GM12878 (cell line): ENCODE measurements at regions of chr3 and their contacts with region 1.

Region 1: DNA sequence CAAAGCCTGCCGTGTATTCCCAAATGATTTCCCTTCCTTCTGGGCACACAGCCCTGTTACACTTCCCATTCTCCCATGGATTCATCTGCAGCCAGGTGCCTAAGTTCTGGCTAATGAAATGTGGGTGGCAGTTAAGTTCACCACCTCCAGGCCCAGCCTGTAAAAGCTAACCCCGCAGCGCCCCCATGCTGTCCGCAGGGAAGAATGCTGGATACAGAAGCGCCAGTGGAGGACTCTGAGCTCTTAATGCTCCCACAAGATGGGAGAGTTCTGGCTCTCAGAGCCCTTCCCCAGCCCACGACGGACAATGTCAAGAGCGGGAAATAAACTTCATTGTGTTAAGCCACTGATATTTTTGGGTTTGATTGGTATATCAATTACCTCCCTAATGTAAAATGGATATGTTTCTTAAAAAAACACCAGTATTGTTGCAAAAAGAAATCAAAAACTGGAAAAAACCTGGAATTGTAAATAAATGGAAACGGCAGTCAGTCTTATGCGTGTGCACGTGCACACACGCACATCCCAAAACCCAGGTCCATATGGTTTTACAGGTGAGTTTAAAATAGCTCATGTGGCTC is 37.7 kb upstream of the FGD5 start:
- DNase-seq: peak; percentile 31
- ATAC-seq: peak; percentile 100
- H3K4me3 ChIP-seq: no peak overlapping the region
- H3K27ac ChIP-seq: no peak overlapping the region
- H3K4me1 ChIP-seq: no peaks in the 10 kb centered on the region
- H3K27me3 ChIP-seq: no peaks in the 10 kb centered on the region; a peak in 1 of 4 replicates
- CTCF ChIP-seq: peak; percentile 80 to 93 (median 87)
- EP300 ChIP-seq: no peak
- POLR2A ChIP-seq: no peak
- RAD21 ChIP-seq: peak; percentile 99

Region 2: DNA sequence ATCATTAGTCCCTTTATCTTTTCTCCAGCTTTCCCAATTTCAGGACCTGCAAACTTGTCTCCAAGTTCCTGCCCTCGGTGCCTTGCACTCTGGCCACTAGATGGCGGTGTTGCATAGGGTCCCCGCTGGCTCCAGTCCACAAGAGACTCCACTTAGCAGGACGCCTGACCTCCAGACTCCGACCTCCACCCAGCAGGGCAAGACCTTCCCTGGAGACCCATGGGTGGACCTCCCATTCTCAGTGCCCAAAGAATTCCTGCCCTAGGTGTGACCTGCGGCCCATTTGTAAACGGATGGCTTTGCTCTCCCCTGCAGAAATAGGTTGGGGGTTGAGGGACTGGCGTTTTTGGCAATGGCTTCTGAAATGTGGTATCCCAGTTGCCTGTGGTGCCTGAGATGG is 519.8 kb before region 1 on chr3:
- CTCF ChIA-PET with region 1: no interaction called
- POLR2A ChIA-PET with region 1: no interaction called
- RAD21 ChIA-PET with region 1: no interaction called
- SMC1A ChIA-PET with region 1: no interaction called
- in situ Hi-C with region 1: no loop called
- intact Hi-C with region 1: loop called (anchors 2 kb)
- DNase-seq: peak; percentile 16
- ATAC-seq: peak; percentile 94
- H3K4me3 ChIP-seq: no peak overlapping the region
- H3K27ac ChIP-seq: no peak overlapping the region
- H3K4me1 ChIP-seq: no peaks in the 10 kb centered on the region
- H3K27me3 ChIP-seq: peaks cover 0 to 4% of the 10 kb centered on the region in 2 experiments; a peak in 2 of 4 replicates
- CTCF ChIP-seq: peak; percentile 89 to 95 (median 94); a peak in 5 of 6 replicates
- EP300 ChIP-seq: no peak
- POLR2A ChIP-seq: no peak
- RAD21 ChIP-seq: peak; percentile 98

Region 3: GRCh38 chr3:14626881-14627411 is 154.1 kb before region 1 on chr3:
- CTCF ChIA-PET with region 1: interaction called, 120 read pairs
- POLR2A ChIA-PET with region 1: no interaction called
- RAD21 ChIA-PET with region 1: interaction called, 15 read pairs
- SMC1A ChIA-PET with region 1: interaction called, 28 read pairs
- in situ Hi-C with region 1: no loop called
- intact Hi-C with region 1: no loop called
- DNase-seq: no peak
- ATAC-seq: no peak
- H3K4me3 ChIP-seq: no peak overlapping the region
- H3K27ac ChIP-seq: no peak overlapping the region
- H3K4me1 ChIP-seq: no peaks in the 10 kb centered on the region
- H3K27me3 ChIP-seq: peaks cover 2 to 8% of the 10 kb centered on the region in 2 experiments; a peak in 3 of 4 replicates
- CTCF ChIP-seq: no peak
- EP300 ChIP-seq: no peak
- POLR2A ChIP-seq: no peak
- RAD21 ChIP-seq: no peak

Region 4: GRCh38 chr3:14660907-14661306 is 120.1 kb before region 1 on chr3:
- CTCF ChIA-PET with region 1: interaction called, 53 read pairs
- POLR2A ChIA-PET with region 1: no interaction called
- RAD21 ChIA-PET with region 1: no interaction called
- SMC1A ChIA-PET with region 1: interaction called, 57 read pairs
- in situ Hi-C with region 1: no loop called
- intact Hi-C with region 1: no loop called
- DNase-seq: no peak
- ATAC-seq: no peak
- H3K4me3 ChIP-seq: no peak overlapping the region
- H3K27ac ChIP-seq: no peak overlapping the region
- H3K4me1 ChIP-seq: peaks cover 7% of the 10 kb centered on the region; the same call in 1 of the 2 replicates
- H3K27me3 ChIP-seq: no peaks in the 10 kb centered on the region
- CTCF ChIP-seq: no peak
- EP300 ChIP-seq: no peak
- POLR2A ChIP-seq: no peak
- RAD21 ChIP-seq: no peak

Region 5: GRCh38 chr3:14691239-14691638 is 89.8 kb before region 1 on chr3:
- CTCF ChIA-PET with region 1: interaction called, 16 read pairs
- POLR2A ChIA-PET with region 1: no interaction called
- RAD21 ChIA-PET with region 1: interaction called, 32 read pairs
- SMC1A ChIA-PET with region 1: interaction called, 86 read pairs
- in situ Hi-C with region 1: no loop called
- intact Hi-C with region 1: no loop called
- DNase-seq: peak; percentile 74
- ATAC-seq: peak; percentile 69
- H3K4me3 ChIP-seq: peak overlapping the region; percentile 4; the same call in 1 of the 2 replicates
- H3K27ac ChIP-seq: peak overlapping the region; percentile 76
- H3K4me1 ChIP-seq: peaks cover 47% of the 10 kb centered on the region
- H3K27me3 ChIP-seq: no peaks in the 10 kb centered on the region
- CTCF ChIP-seq: no peak
- EP300 ChIP-seq: peak; percentile 82 to 87
- POLR2A ChIP-seq: peak; percentile 47; the same call in 1 of the 2 replicates
- RAD21 ChIP-seq: no peak

Region 6: GRCh38 chr3:14750650-14751049 is 30.4 kb before region 1 on chr3:
- CTCF ChIA-PET with region 1: interaction called, 9 read pairs
- POLR2A ChIA-PET with region 1: no interaction called
- RAD21 ChIA-PET with region 1: interaction called, 9 read pairs
- SMC1A ChIA-PET with region 1: interaction called, 12 read pairs
- in situ Hi-C with region 1: no loop called
- intact Hi-C with region 1: no loop called
- DNase-seq: no peak
- ATAC-seq: no peak
- H3K4me3 ChIP-seq: no peak overlapping the region
- H3K27ac ChIP-seq: no peak overlapping the region
- H3K4me1 ChIP-seq: no peaks in the 10 kb centered on the region
- H3K27me3 ChIP-seq: no peaks in the 10 kb centered on the region
- CTCF ChIP-seq: no peak
- EP300 ChIP-seq: no peak
- POLR2A ChIP-seq: no peak
- RAD21 ChIP-seq: no peak

Region 7: DNA sequence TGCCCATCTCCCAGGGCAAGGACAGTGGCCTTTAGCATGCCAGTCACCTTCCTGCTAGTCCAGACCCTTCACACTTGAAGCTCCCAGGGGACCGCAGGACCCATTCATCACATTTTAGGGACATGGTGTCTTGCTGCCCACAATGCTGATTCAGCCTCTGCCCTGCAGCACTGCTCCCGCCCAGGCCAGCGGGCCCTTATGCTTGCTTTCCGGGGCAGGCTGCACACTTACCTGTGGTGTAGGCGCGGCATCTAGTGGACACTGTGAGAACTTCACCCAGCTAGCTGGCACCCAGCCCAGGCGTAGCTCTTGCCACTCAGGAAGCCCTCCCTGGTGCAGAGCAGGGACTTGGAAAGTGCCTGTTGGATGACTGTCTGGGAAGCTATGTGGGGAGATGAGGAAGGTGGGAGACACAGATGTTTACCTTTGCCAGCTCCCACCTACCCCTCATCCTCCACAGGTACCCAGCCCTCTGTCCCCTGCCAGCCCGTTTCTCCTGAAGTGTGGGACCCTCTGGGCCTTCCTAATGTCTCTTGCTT is 140.1 kb after region 1 on chr3:
- CTCF ChIA-PET with region 1: interaction called, 39 read pairs
- POLR2A ChIA-PET with region 1: no interaction called
- RAD21 ChIA-PET with region 1: interaction called, 36 read pairs
- SMC1A ChIA-PET with region 1: interaction called, 23 read pairs
- in situ Hi-C with region 1: no loop called
- intact Hi-C with region 1: no loop called
- DNase-seq: no peak
- ATAC-seq: peak; percentile 97
- H3K4me3 ChIP-seq: no peak overlapping the region
- H3K27ac ChIP-seq: no peak overlapping the region
- H3K4me1 ChIP-seq: no peaks in the 10 kb centered on the region
- H3K27me3 ChIP-seq: no peaks in the 10 kb centered on the region
- CTCF ChIP-seq: peak; percentile 97 to 99 (median 98); a peak in 5 of 6 replicates
- EP300 ChIP-seq: no peak
- POLR2A ChIP-seq: no peak
- RAD21 ChIP-seq: peak; percentile 98

Region 8: DNA sequence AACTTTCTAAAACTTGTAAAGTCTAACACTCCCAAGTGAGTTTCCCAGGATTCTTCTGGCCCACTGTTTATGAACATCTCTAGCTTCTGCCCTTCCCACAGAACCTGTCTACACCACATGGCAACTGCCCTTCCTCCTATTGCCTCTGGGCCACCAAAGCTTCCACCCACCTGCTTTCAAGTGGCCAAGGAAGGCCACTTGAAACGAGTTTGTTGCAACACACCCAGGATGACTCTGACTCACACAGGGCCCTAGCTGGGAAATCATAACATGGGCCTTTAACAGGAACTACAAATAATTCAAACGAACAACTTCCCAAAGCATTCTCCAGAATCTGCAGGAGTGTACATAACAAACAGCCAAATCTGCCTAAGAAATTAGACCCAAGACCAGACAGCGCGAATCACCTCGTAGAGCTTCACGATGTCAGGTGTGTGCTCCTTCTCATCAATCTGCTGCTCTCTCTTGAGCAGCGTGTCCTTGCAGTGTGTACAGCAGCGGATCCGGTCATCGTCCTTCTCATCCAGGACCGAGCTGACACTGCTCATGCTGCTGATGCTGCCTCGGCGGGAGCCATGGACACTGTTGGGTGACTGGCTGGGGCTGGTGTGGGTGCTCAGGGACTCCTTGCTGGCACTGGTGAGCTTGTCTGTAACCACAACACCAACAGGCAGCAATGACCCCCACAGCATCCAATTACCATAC is 301.1 kb after region 1 on chr3:
- CTCF ChIA-PET with region 1: no interaction called
- POLR2A ChIA-PET with region 1: no interaction called
- RAD21 ChIA-PET with region 1: no interaction called
- SMC1A ChIA-PET with region 1: no interaction called
- in situ Hi-C with region 1: no loop called
- intact Hi-C with region 1: no loop called
- DNase-seq: no peak
- ATAC-seq: no peak
- H3K4me3 ChIP-seq: no peak overlapping the region
- H3K27ac ChIP-seq: no peak overlapping the region
- H3K4me1 ChIP-seq: no peaks in the 10 kb centered on the region
- H3K27me3 ChIP-seq: no peaks in the 10 kb centered on the region
- CTCF ChIP-seq: no peak
- EP300 ChIP-seq: no peak
- POLR2A ChIP-seq: no peak
- RAD21 ChIP-seq: no peak